Mammary epithelial cell (primary cell): ENCODE measurements at regions of chr11 and their contacts with region 1.

Region 1: DNA sequence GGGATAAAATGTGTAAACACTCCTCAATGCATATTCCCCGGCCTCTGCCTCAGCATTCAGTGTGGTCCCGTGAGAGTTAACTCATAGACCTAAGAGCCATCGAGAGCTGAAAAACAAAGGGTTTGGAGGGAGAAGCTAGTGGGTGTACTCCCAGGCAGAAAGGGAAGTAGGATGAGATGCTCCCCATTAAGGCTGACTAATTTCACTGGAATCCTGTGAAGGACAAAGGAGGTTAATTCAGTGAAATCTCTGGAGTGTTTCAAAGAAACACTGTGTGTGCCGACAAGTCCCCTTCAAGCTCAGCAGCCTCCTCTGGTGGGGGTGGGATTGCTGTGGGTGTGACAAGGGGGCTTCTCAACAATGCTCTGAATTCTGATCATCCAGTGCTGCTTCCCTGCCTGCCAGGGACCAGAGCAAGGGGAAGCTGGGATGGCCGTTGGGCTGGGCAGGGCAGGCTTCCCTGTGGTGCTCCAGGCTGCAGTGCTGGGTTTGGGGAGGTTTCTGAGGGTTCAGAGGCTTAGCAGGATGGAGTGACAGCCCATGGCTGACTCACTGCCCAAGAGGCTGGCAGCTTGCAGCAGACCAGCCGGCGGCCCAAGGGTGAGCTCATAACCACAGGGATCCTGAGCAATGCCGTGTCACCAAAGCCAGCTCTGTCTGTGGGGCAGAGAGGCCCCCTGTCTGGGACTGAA is 61.4 kb upstream of the BMAL1 start:
- DNase-seq: peak; percentile 96
- H3K4me3 ChIP-seq: peak overlapping the region in 1 of 3 experiments; percentile 25
- H3K27ac ChIP-seq: peak overlapping the region; percentile 95
- H3K4me1 ChIP-seq: peaks cover 34% of the 10 kb centered on the region
- H3K27me3 ChIP-seq: no peaks in the 10 kb centered on the region
- CTCF ChIP-seq: no peak

Region 2: GRCh38 chr11:12914400-12914912 is 301.7 kb before region 1 on chr11:
- CTCF ChIA-PET with region 1: interaction called, 21 read pairs
- dilution Hi-C with region 1: no loop called
- in situ Hi-C with region 1: no loop called
- intact Hi-C with region 1: no loop called
- DNase-seq: peak; percentile 32
- H3K4me3 ChIP-seq: no peak overlapping the region
- H3K27ac ChIP-seq: no peak overlapping the region
- H3K4me1 ChIP-seq: peaks cover 3% of the 10 kb centered on the region
- H3K27me3 ChIP-seq: no peaks in the 10 kb centered on the region
- CTCF ChIP-seq: peak; percentile 71 to 74

Region 3: DNA sequence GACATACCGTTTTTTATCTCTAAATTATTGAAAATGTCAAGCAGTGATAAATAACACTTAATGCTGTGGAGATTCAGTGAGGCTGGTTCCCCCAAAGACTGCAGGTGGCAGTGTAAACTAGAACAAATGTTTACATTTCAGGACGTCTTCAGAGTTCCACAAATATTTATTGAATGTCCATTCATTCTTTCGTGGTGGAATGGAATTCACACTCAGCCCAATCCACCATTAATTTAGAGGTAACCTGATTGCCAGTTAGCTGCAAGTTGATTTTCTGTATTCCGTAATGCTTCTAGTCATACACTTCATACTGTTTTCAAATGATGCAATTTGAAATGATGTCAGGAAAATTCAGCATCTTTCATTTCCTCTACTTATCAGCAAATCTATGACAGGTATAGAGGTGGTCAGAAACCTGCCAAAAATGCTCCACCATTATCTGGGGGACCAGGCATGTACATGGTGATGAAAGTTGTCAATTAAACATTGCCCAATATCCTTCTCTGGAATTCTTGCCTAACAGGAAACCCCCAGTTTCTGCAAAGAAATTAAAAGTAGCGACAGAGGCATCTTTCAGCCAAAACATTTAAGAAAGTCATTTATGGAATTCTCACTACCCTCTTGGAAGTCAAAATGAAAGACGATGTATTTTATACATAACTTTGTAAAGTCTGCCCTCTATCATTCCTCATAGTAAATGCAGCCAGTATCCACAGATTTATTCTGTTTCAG is 32.9 kb before region 1 on chr11:
- CTCF ChIA-PET with region 1: no interaction called
- dilution Hi-C with region 1: no loop called
- in situ Hi-C with region 1: no loop called
- intact Hi-C with region 1: no loop called
- DNase-seq: peak; percentile 77
- H3K4me3 ChIP-seq: peak overlapping the region in 2 of 3 experiments; percentile 4 to 27
- H3K27ac ChIP-seq: peak overlapping the region; percentile 5
- H3K4me1 ChIP-seq: peaks cover 7% of the 10 kb centered on the region
- H3K27me3 ChIP-seq: no peaks in the 10 kb centered on the region
- CTCF ChIP-seq: peak; percentile 56 to 63

Region 4: DNA sequence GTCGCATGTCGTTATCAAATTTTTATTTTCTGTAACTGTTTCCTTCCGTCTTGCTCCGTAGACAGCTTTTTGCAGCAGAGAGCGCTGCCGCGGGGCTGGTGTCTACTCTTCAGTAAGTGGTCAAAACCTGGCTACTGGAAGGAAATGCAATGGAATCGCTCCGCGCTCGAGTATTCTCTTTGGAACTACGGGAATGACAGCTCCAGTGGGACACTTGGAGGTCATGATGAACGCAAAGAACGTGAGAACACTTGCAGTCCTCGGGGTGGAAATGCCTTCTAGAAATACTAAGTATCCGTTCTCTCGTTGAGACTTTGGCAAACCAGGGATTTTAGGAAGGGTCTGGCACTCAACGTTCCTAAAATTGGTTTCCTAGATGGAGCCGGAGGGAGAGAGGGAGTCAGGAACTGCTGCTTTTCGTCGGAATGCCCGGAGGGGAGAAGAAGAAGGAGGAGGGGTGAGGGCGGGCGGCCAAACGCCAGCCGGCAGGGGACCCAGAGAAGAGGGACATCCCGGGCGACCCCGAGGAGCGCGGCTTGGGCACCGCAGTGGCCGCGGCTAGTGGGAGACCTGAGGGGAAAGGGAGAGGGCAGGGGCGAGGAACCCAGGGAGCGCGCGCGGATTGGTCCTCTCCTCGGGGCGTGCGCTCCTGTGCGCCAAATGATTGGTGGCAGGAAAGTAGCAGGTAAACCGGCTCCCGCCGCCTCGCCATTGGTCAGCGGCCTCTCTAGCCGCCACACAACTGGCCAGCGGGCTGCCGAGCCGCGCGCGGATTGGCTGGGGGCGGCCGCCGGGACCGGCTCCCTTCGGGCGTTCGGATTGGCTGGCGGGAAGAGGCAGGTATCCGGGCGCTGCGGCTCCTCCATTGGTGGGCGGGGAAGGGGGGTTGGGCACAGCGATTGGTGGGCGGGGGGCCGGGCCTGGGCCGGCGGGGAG is 60.9 kb after region 1 on chr11:
- CTCF ChIA-PET with region 1: interaction called, 4 read pairs
- dilution Hi-C with region 1: no loop called
- in situ Hi-C with region 1: no loop called
- intact Hi-C with region 1: loop called (anchors 1 kb)
- DNase-seq: peak; percentile 99
- H3K4me3 ChIP-seq: peak overlapping the region; percentile 83 to 96 (median 83)
- H3K27ac ChIP-seq: peak overlapping the region; percentile 75
- H3K4me1 ChIP-seq: peaks cover 17% of the 10 kb centered on the region
- H3K27me3 ChIP-seq: no peaks in the 10 kb centered on the region
- CTCF ChIP-seq: no peak